Transverse colon (tissue), 4 donors: ENCODE measurements at regions of chr9 and their contacts with region 1.

Region 1: DNA sequence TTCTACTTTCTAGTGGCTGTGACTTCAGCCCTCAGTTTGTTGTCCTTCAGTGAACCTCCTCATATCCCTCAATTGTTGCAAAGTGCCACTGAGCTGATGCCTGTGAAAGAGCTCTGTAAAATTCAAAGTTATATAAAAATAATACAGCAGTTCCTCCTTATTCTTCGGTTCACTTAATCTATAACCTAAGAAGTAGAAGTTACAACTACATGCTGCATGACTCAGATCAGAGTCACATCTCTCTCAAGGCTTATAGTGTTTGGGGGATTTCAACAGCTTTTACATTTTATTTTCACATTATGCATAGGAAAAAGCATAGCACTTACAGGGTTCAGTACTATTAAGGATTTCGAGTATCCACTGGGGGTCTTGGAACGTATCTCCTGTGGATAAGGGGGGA is 25.1 kb upstream of the GCNT1 start:
- DNase-seq: no peak
- H3K4me3 ChIP-seq: no peak overlapping the region
- H3K27ac ChIP-seq: no peak overlapping the region
- H3K4me1 ChIP-seq: no peaks in the 10 kb centered on the region
- H3K27me3 ChIP-seq: no peaks in the 10 kb centered on the region
- CTCF ChIP-seq: no peak
- EP300 ChIP-seq: no peak
- POLR2A ChIP-seq: no peak

Region 2: GRCh38 chr9:75728391-75728790 is 705.4 kb before region 1 on chr9:
- in situ Hi-C with region 1: no loop called
- intact Hi-C with region 1: loop called (anchors 5 kb)
- DNase-seq: no peak
- H3K4me3 ChIP-seq: no peak overlapping the region
- H3K27ac ChIP-seq: no peak overlapping the region
- H3K4me1 ChIP-seq: no peaks in the 10 kb centered on the region
- H3K27me3 ChIP-seq: no peaks in the 10 kb centered on the region
- CTCF ChIP-seq: no peak
- EP300 ChIP-seq: no peak
- POLR2A ChIP-seq: no peak